ENCODE measurements at regions of chr21 and their contacts with region 1.

Region 1: DNA sequence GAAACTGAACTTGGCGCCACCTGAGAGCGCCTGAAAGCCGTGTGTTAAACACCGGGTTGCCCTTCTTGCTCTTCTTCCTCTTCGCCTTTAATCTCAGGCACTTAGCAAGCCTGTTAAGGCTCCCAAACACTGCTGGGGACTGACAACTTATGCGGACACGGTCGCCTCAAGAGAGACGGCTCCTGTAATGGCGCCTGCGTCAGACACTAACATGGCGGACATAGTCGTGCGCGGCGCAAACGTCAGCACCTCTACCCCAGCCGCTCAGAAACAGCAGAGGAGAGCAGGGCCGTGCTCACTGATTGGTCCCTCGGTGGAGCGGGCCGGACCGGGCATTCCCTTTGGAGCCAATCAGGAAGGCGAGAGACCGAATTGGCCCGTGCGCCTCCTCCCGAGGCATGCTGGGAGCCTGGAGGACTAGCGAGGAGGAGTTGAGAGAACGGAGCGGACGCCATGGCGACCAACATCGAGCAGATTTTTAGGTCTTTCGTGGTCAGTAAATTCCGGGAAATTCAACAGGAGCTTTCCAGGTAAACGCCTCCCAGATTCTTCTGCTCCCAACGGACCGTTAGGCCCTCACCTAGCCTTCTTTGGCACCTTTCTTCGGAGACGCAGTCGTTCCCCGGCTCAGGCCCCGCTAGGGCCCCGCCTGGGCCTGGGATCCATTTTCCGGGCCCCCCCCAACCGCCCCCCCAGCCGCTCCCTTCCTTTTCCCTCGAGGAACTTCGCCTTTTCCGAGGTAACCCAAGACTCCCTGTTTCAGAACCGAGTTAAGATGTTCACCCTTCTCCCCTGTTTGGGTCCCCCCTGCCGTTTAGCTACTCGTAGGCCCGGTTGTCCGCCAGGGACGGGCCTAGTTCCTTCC is at the start of gene SON:
- DNase-seq: peak; percentile 86
- ATAC-seq: peak; percentile 88
- H3K4me3 Mint-ChIP-seq: peak within 1 kb of the TSS; percentile 98
- H3K27ac Mint-ChIP-seq: peak within 1 kb of the TSS; percentile 100
- H3K4me1 Mint-ChIP-seq: peaks cover 48% of the 10 kb centered on the region
- H3K27me3 Mint-ChIP-seq: no peaks in the 10 kb centered on the region
- CTCF ChIP-seq: no peak
- total RNA-seq, gene SON: 429 and 474 TPM in 2 replicates

Region 2: GRCh38 chr21:32392880-32393676 is 1149.8 kb before region 1 on chr21 and contains the start of gene URB1:
- CTCF ChIA-PET with region 1: no interaction called
- POLR2A ChIA-PET with region 1: no interaction called
- intact Hi-C with region 1: loop called (anchors 2 kb)
- DNase-seq: peak; percentile 97
- ATAC-seq: peak; percentile 97
- H3K4me3 Mint-ChIP-seq: peak within 1 kb of the TSS; percentile 87
- H3K27ac Mint-ChIP-seq: peak within 1 kb of the TSS; percentile 83
- H3K4me1 Mint-ChIP-seq: peaks cover 41% of the 10 kb centered on the region
- H3K27me3 Mint-ChIP-seq: peaks cover 6% of the 10 kb centered on the region
- CTCF ChIP-seq: no peak
- total RNA-seq, gene URB1: 18.1 and 22.2 TPM in 2 replicates

Region 3: DNA sequence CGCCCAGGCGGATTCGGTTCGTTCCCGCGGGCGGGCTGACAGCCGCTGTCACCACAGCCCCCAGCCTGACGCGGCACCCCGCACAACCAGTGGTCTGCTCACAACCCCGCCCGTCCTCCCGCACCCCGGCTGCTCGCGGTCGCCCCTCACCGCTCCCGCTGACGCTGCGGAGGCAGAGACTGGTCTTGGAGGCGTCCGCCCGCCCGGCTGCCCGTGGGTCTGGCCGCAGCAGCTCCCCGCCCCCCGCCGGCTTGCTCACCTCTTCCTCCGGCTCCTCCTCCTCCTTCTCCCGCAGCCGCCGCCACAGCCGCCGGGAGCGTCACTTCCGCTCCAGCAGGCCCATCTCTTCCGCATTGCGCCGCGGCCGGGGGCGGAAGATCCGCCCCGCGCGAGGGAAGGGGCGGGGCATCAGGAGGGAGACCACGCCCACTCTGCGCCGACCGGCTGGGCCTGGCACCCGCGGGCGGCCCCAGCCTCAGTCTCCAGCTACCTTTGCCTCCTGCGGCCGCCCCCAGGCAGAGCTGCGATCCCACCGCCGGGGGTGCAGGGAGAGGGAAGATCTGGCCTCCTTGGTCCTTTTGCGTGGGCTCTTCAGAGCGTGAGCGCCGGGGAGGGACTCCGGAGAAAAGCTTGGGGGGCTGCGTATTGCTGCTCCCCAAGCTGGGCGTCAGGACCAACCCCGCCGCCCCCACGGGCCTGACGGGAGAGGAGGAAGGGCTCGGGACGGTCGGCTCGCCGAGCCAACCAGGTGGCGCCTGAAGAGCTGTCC is 815.0 kb before region 1 on chr21 and contains the start of gene SYNJ1:
- CTCF ChIA-PET with region 1: no interaction called
- POLR2A ChIA-PET with region 1: interaction called, 9 read pairs
- intact Hi-C with region 1: loop called (anchors 5 kb)
- DNase-seq: peak; percentile 94
- ATAC-seq: peak; percentile 91
- H3K4me3 Mint-ChIP-seq: peak within 1 kb of the TSS; percentile 93
- H3K27ac Mint-ChIP-seq: peak within 1 kb of the TSS; percentile 72
- H3K4me1 Mint-ChIP-seq: peaks cover 14% of the 10 kb centered on the region
- H3K27me3 Mint-ChIP-seq: no peaks in the 10 kb centered on the region
- CTCF ChIP-seq: no peak
- total RNA-seq, gene SYNJ1: 5.2 and 5.4 TPM in 2 replicates

Region 4: GRCh38 chr21:33229784-33230544 is 312.9 kb before region 1 on chr21 and contains the start of gene IFNAR2:
- CTCF ChIA-PET with region 1: no interaction called
- POLR2A ChIA-PET with region 1: no interaction called
- intact Hi-C with region 1: loop called (anchors 1 kb)
- DNase-seq: peak; percentile 77
- ATAC-seq: peak; percentile 88
- H3K4me3 Mint-ChIP-seq: peak within 1 kb of the TSS; percentile 92
- H3K27ac Mint-ChIP-seq: peak within 1 kb of the TSS; percentile 86
- H3K4me1 Mint-ChIP-seq: peaks cover 47% of the 10 kb centered on the region
- H3K27me3 Mint-ChIP-seq: no peaks in the 10 kb centered on the region
- CTCF ChIP-seq: no peak
- total RNA-seq, gene IFNAR2: 24.9 and 29.2 TPM in 2 replicates

Region 5: DNA sequence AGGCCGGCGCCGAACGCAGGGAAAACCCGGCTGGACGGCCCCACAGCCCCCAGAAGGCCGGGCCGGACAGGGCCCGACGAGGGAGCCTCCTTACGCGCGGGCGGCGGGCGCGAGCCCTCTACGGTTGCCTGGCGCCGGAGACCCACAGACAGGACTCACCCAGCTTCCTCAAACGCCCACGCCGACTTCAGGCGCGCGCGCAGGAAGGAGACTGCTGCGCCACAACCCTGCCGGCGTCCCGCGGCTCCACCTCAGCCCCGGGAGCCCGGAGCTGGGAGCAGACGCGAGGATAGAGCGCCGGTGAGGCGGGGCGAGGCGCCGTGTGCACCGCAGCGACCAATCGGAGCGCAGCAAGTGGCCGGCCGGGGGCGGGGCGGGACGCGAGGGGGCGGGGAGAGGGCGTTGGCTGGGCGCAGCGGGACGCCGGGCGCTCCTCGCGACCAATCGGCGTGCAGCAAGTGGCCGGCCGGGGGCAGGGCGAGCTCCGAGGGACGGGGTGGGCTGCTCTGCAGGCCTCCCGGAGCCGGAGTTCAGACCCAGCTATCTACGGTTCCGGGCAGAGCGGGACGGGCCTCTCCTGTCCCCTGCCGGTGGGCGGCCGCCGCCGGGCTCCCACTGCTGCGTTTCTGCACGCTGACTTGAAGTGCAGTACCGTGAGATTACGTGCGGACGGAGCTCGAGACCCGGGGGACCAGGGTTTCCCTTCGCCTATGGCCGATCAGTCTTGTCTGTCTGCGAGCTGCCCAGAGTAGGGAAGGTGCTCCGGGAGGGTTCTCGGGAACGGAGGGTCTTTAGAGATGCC is 63.0 kb before region 1 on chr21 and contains the start of gene TMEM50B:
- CTCF ChIA-PET with region 1: no interaction called
- POLR2A ChIA-PET with region 1: interaction called, 62 read pairs
- intact Hi-C with region 1: loop called (anchors 1 kb)
- DNase-seq: peak; percentile 88
- ATAC-seq: peak; percentile 88
- H3K4me3 Mint-ChIP-seq: peak within 1 kb of the TSS; percentile 92
- H3K27ac Mint-ChIP-seq: peak within 1 kb of the TSS; percentile 90
- H3K4me1 Mint-ChIP-seq: peaks cover 20% of the 10 kb centered on the region
- H3K27me3 Mint-ChIP-seq: no peaks in the 10 kb centered on the region
- CTCF ChIP-seq: no peak
- total RNA-seq, gene TMEM50B: 42.3 and 47.2 TPM in 2 replicates

Region 6: GRCh38 chr21:33531007-33531406 is 11.9 kb before region 1 on chr21:
- CTCF ChIA-PET with region 1: no interaction called
- POLR2A ChIA-PET with region 1: interaction called, 11 read pairs
- intact Hi-C with region 1: no loop called
- DNase-seq: no peak
- ATAC-seq: no peak
- H3K4me3 Mint-ChIP-seq: no peak overlapping the region
- H3K27ac Mint-ChIP-seq: no peak overlapping the region
- H3K4me1 Mint-ChIP-seq: no peaks in the 10 kb centered on the region
- H3K27me3 Mint-ChIP-seq: no peaks in the 10 kb centered on the region
- CTCF ChIP-seq: no peak

Region 7: DNA sequence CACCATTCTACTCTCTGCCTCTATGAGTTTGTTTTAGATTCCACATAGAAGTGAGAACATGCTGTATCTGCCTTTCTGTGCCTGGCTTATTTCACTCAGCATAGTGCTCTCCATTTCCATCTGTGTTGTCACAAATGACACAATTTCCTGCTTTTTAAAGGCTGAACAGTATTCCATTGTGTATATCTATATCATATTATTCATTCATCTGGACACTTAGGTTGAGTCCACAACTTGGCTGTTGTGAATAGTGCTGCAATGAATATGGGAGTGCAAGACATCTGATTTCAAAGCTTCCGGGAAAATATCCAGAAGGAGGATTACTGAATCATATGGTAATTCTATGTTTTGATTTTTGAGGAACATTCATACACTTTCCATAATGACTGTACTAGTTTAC is 65.7 kb after region 1 on chr21:
- CTCF ChIA-PET with region 1: interaction called, 3 read pairs
- POLR2A ChIA-PET with region 1: interaction called, 7 read pairs
- intact Hi-C with region 1: loop called (anchors 1 kb)
- DNase-seq: no peak
- ATAC-seq: no peak
- H3K4me3 Mint-ChIP-seq: no peak overlapping the region
- H3K27ac Mint-ChIP-seq: no peak overlapping the region
- H3K4me1 Mint-ChIP-seq: no peaks in the 10 kb centered on the region
- H3K27me3 Mint-ChIP-seq: no peaks in the 10 kb centered on the region
- CTCF ChIP-seq: no peak